Colonic mucosa (tissue), 4 donors: ENCODE measurements at regions of chr7 and their contacts with region 1.

Region 1: GRCh38 chr7:158782761-158783401 is 46.4 kb downstream of the ESYT2 start:
- DNase-seq: no peak
- H3K4me3 ChIP-seq: no peak overlapping the region
- H3K27ac ChIP-seq: no peak overlapping the region
- H3K4me1 ChIP-seq: no peaks in the 10 kb centered on the region
- H3K27me3 ChIP-seq: no peaks in the 10 kb centered on the region
- CTCF ChIP-seq: no peak

Region 2: DNA sequence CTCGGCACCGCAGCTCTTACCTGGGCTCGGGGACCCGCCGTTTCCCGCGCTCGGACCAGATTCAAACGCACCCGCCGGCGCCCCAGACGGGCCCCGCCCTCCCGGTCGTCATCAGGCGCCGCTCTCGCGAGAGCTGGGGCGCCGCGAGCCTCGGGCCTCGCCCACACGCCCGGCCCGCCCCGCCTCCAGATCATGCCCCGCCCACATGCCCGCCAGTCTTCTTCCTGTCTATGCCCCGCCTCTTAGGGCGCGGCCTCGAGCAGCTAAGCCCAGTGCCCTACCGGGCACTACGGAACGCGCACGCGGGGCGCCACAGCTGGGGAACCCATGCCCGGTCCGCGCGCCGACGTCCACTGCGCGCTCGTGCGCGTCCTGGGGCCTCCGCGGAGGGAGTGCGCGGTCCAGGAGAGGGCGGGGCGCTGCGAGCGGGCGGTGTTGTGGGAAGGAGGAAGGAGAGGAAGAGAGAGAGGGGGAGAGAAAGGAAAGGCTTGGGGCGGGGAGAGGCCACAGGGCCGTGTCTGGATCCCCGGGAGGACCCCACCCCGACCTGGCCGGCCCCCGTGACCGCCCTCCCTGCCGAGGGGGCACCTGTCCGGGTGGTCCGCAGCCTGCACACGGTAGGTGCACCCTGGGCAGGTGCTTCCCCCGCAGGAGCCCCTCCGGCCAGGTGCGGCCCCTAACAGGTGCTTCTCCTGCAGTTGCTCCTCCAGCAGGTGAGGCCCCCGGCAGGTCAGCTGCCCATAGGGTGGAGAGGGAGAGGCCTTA is 78.0 kb before region 1 on chr7 and contains the start of gene NCAPG2:
- intact Hi-C with region 1: loop called (anchors 10 kb)
- DNase-seq: peak; percentile 100
- H3K4me3 ChIP-seq: peak within 1 kb of the TSS; percentile 95
- H3K27ac ChIP-seq: peak within 1 kb of the TSS; percentile 89
- H3K4me1 ChIP-seq: no peaks in the 10 kb centered on the region
- H3K27me3 ChIP-seq: no peaks in the 10 kb centered on the region
- CTCF ChIP-seq: no peak
- total RNA-seq, gene NCAPG2: 15.0 to 48.4 TPM

Region 3: DNA sequence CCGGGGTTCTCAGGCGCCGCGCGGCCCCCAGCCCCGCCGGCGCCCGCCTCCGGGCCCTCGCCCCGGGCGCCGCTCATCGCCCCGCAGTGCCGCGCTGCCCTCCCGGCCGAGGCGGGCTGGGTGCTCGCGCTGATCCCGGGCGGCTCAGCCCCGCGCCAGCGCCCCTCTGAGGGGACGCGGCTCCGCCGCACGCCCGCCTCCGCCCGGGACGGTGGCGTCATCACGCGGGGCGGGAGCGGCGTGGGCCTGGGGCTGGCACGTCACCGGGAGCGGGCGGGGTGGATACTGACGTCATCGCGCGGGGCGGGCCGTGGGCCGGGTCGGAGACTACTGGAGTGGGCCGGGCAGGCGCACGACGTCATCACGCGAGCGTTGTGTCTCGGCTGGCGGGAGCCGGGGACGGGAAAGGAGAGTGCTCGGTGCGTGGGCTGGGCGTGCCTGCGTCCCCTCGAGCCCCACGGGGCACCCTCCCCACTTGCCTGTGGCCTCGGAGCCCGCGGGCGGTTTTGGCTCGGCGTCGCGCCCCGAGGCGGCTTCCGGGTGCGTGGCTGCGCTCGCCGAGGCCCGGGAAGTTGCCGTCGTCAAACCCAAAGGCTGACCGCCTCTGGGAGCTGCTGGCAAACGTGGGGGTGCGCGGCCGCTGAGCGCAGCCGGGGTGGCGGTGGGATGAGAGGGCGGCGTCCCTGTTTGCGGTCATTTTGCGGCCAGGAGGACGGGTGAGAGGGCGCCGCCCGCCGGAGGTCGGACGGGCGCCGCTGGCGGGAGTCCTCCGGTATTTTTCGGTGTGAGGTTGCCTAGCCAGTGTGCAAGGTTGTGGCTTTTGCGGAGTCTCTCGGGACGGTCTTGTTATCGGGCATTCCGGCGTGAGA is 46.7 kb after region 1 on chr7 and contains the start of gene ESYT2:
- intact Hi-C with region 1: loop called (anchors 5 kb)
- DNase-seq: peak; percentile 99
- H3K4me3 ChIP-seq: peak within 1 kb of the TSS; percentile 84
- H3K27ac ChIP-seq: peak within 1 kb of the TSS; percentile 99
- H3K4me1 ChIP-seq: peaks cover 3% of the 10 kb centered on the region
- H3K27me3 ChIP-seq: no peaks in the 10 kb centered on the region
- CTCF ChIP-seq: no peak
- total RNA-seq, gene ESYT2: 57.5 to 105 TPM

Region 4: DNA sequence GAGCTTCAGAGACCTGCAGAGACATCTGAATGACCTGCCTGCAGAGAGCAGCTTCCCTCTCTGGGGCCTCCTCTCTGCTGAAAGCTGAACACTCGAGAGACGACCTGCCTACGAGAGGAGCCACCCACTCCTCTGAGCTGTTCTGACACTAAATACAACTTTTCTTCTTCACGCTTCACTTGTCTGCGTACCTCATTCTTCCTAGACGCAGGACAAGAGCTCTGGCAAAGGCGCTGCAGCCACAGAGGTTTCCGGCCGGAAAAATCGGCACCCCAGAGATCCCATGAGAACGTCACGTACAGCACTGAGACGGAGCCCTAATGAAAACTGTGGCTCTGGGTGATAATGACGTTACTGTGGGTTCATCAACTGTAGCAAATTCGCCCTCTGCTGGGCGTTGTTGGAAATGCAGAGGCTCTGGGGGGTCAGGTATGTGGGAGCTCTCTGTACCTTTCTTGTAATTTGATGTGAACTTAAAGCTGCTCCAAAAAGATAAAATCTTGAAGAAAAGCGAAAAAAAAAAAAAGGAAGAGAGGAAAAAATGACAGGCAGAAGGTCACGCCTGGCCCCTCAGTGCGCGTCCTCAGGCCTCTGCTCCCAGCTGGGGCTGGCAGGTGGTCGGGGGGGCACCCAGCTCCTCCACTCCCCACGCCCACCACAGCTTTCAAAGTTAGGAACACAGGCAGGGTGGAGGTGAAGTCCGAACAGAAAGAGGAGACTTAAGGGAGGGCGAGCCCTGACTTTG is 194.1 kb after region 1 on chr7:
- intact Hi-C with region 1: loop called (anchors 10 kb)
- DNase-seq: peak; percentile 93
- H3K4me3 ChIP-seq: peak overlapping the region; percentile 22
- H3K27ac ChIP-seq: no peak overlapping the region
- H3K4me1 ChIP-seq: no peaks in the 10 kb centered on the region
- H3K27me3 ChIP-seq: no peaks in the 10 kb centered on the region
- CTCF ChIP-seq: peak; percentile 97